Activated CD8-positive, alpha-beta T cell treated with anti-CD3 and anti-CD28 coated beads, Interleukin-2, amount 10 ng/mL, durations not matched to agents 7 days and 5 days (primary cell): ENCODE measurements at regions of chr3 and their contacts with region 1.

Region 1: DNA sequence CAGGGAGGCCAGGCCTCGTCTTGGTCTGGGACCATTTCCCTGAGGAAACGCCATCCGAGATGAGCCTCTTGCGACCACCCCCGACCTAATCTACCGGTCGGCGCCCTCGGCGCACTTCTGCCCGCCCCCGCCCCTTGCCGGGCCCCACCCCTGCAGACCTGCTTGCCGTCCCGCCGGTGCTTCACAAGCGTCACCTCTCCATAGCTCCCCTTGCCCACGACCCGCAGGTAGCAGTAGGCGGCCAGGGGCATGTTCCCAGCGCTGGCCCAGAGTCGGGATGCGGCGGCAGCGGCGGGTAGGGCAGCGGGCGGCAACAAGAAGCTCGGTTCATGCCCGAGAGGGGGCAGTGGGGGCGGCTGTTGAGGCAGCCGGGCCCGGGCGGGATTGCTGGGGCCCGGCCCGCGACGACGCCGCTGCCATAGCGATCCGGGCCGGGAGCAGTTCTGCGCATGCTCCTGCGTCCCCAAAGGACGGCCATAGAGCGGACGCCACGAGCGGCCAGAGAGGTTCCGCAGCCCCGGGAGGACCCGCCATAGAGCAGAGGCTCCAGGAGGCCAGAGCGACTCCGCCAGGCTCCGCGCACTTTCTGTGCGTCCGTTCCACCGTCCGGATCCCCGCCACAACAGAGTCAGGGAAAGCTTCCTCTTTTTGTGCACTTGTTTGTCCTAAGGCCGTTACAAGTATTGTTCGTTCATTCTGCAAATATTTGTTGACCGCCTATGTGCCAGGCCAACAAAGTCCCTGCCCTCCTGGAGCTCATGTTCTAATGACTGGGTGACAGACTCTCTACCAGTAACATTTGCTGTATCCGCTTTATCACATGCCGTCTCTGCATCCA is at the start of gene NEK4:
- DNase-seq: peak; percentile 89
- ATAC-seq: peak; percentile 96
- H3K4me3 Mint-ChIP-seq: peak within 1 kb of the TSS; percentile 94
- H3K27ac Mint-ChIP-seq: peak within 1 kb of the TSS; percentile 96
- H3K4me1 Mint-ChIP-seq: peaks cover 21% of the 10 kb centered on the region
- H3K27me3 Mint-ChIP-seq: peaks cover 4% of the 10 kb centered on the region
- total RNA-seq, gene NEK4: 21.9 to 23.7 TPM

Region 2: GRCh38 chr3:52663098-52663497 is 107.6 kb before region 1 on chr3:
- CTCF ChIA-PET with region 1: no interaction called
- POLR2A ChIA-PET with region 1: no interaction called
- DNase-seq: no peak
- ATAC-seq: no peak
- H3K4me3 Mint-ChIP-seq: no peak overlapping the region
- H3K27ac Mint-ChIP-seq: no peak overlapping the region
- H3K4me1 Mint-ChIP-seq: no peaks in the 10 kb centered on the region
- H3K27me3 Mint-ChIP-seq: no peaks in the 10 kb centered on the region

Region 3: DNA sequence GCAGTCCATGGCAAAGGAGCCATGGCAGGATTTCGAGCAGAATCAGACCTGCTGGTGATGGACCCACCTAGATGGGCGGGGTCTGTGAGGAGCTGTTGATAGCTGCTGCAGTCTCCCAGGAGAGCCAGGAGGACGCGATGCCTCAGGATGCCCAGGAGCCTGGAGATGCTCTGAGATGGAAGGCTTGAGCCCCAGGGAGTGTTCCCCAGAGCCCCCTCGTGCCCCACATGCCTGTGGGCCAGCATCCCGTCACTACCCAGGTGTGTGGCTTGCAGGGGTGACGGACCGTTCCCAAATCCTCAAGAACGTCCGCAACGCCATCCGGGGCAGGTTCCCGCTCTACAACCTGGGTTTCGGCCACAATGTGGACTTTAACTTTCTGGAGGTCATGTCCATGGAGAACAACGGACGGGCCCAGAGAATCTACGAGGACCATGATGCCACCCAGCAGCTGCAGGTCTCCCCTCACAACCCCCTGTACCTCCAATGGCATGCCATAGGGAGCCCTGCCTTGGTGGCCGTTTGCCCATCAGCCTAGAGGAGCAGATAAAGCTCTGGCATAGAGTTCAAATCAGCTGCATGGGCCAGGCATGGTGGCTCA is 13.4 kb after region 1 on chr3:
- CTCF ChIA-PET with region 1: interaction called, 12 read pairs
- POLR2A ChIA-PET with region 1: interaction called, 5 read pairs
- DNase-seq: no peak
- ATAC-seq: no peak
- H3K4me3 Mint-ChIP-seq: no peak overlapping the region
- H3K27ac Mint-ChIP-seq: no peak overlapping the region
- H3K4me1 Mint-ChIP-seq: no peaks in the 10 kb centered on the region
- H3K27me3 Mint-ChIP-seq: peaks cover 12% of the 10 kb centered on the region